Heart left ventricle (tissue), 16 donors: ENCODE measurements at regions of chr6 and their contacts with region 1.

Region 1: DNA sequence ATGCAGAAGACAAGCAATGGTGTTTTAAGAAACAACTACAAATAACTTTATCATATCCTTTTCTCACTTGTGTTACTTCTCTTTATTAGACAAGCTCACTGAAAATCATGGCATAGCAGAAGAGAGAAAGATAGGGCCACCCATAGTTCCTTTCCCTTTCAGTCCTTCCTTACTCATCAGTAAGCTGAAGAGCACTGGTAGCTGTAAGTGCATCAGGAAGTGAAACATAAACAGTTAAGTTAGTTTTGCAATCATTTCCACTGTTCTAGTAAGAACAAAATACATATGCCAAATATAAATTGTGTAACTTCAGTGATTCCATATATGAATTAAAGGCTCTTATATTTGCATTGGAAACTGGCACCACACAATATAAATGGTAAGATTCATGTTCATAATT is 220.1 kb downstream of the HACE1 start:
- DNase-seq: no peak
- ATAC-seq: peak; percentile 29 to 66 (median 50)
- H3K4me3 ChIP-seq: no peak overlapping the region
- H3K27ac ChIP-seq: peak overlapping the region in 9 of 12 donors; percentile 15 to 78 (median 52)
- H3K4me1 ChIP-seq: peaks cover 0 to 34% (median 11%) of the 10 kb centered on the region in 12 donors
- H3K27me3 ChIP-seq: no peaks in the 10 kb centered on the region
- CTCF ChIP-seq: no peak
- POLR2A ChIP-seq: no peak

Region 2: DNA sequence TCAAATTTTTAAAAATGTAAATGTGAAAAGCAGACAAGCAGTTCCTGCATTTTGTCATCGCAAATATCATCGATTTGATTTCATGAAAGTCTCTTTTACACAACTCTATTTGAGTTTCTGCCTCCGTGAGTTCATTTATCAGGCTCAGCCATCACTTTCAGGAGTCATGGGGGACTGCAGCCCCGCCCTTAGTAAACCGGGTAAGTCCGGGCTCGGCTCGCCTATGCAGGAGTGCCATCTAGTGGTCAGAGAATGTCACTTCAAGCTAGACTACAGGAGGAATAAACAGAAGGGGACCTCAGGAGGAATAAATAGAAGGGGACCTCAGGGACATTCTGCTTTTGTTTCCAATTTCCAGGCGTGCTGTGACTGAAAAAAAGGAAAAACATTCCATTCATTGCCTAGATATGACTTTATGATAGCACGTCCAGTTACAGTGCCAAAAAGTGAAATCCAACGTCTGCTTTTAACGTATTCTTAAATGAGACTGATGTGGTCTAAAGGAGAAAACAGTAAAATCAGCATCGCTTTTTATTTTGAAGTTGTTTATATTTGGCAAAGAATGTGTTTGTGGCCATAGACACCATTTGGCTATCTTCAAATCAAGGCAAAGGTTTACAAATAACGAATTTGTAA is 113.9 kb before region 1 on chr6:
- intact Hi-C with region 1: loop called in 1 of 10 experiments (anchors 5 kb)
- DNase-seq: peak; percentile 55 to 76 (median 64)
- ATAC-seq: peak in 3 of 4 donors; percentile 90 to 95 (median 91)
- H3K4me3 ChIP-seq: peak overlapping the region in 9 of 12 donors; percentile 26 to 46 (median 31)
- H3K27ac ChIP-seq: no peak overlapping the region
- H3K4me1 ChIP-seq: peaks cover 0 to 22% (median 1%) of the 10 kb centered on the region in 12 donors
- H3K27me3 ChIP-seq: no peaks in the 10 kb centered on the region
- CTCF ChIP-seq: peak; percentile 84 to 96 (median 92)
- POLR2A ChIP-seq: no peak

Region 3: GRCh38 chr6:104705095-104705707 is 65.5 kb after region 1 on chr6:
- intact Hi-C with region 1: loop called in 2 of 10 experiments (anchors 5 to 10 kb)
- DNase-seq: peak in 4 of 5 donors; percentile 20 to 53 (median 28)
- ATAC-seq: peak in 3 of 4 donors; percentile 77 to 96 (median 90)
- H3K4me3 ChIP-seq: peak overlapping the region in 1 of 12 donors; percentile 8
- H3K27ac ChIP-seq: peak overlapping the region; percentile 35 to 75 (median 57)
- H3K4me1 ChIP-seq: peaks cover 0 to 23% (median 0%) of the 10 kb centered on the region in 12 donors
- H3K27me3 ChIP-seq: no peaks in the 10 kb centered on the region
- CTCF ChIP-seq: no peak
- POLR2A ChIP-seq: no peak